ENCODE measurements at regions of chr10 and their contacts with region 1.

Region 1: GRCh38 chr10:34815185-34816084 is at the start of gene PARD3:
- DNase-seq: peak; percentile 71 to 83 (median 73)
- ATAC-seq: peak; percentile 43 to 85 (median 81)
- H3K4me3 ChIP-seq: peak within 1 kb of the TSS; percentile 67 to 98 (median 84)
- H3K27ac ChIP-seq: peak within 1 kb of the TSS; percentile 78 to 96 (median 82)
- H3K4me1 ChIP-seq: peaks cover 0 to 56% (median 24%) of the 10 kb centered on the region in 12 donors
- H3K27me3 ChIP-seq: peaks cover 0 to 37% (median 0%) of the 10 kb centered on the region in 9 donors
- CTCF ChIP-seq: no peak
- POLR2A ChIP-seq: no peak
- total RNA-seq, gene PARD3: 27.9 to 69.7 (median 33.1) TPM

Region 2: DNA sequence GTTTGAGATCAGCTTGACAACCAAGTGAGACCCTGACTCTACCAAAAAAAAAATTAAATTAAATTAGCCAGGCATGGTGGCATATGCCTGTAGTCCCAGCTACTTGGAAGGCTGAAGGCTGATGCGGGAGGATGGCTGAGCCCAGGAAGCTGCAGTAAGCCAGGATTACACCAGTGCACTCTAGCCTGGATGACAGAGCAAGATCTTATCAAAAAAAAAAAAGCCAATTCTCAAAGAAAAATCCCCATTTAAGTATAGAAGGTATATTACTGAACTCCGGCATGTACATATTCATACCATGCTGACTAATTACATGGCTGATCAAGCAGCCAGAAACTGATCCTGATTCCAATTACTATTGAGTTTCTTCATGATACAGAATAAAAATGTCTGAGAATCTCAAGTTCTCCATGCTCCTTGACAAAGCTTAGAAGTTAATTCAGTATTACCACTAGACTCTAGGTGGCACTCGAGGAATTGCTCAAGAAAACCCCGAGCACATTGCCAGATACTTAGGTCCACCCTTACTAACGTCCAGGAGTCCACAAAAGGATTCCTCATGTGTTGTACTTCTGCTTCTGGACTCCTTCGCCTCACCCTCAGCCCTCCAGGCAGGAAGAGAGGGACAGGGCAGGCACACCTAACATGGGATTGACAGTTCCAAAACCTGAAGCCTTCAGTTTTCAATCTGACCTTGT is 149.3 kb before region 1 on chr10:
- intact Hi-C with region 1: loop called in 7 of 10 experiments (anchors 5 to 10 kb)
- DNase-seq: peak in 1 of 5 donors; percentile 36
- ATAC-seq: peak in 3 of 4 donors; percentile 80 to 85 (median 84)
- H3K4me3 ChIP-seq: no peak overlapping the region
- H3K27ac ChIP-seq: no peak overlapping the region
- H3K4me1 ChIP-seq: peaks cover 0 to 23% (median 2%) of the 10 kb centered on the region in 12 donors
- H3K27me3 ChIP-seq: no peaks in the 10 kb centered on the region
- CTCF ChIP-seq: peak; percentile 28 to 67 (median 54)
- POLR2A ChIP-seq: no peak

Region 3: DNA sequence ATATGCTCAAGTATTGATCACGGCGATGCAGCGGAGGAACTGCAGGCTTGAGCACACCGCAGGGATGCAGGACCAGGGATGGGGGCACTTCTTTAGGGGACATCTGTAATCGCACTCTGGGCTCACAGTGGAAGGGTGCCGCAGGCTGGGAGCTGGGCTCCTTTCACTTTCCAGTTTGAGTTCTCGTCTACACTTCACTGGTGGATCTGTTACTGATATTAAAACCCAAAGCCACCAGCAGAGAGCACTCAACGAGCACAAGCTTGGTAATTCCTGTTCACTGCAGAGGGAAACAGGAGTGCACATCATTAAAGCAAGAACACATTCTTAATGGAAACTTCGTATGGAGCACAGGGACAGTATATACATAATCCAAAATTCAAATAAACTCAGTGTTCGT is 91.7 kb before region 1 on chr10:
- intact Hi-C with region 1: loop called in 7 of 10 experiments (anchors 5 kb)
- DNase-seq: peak in 4 of 5 donors; percentile 37 to 54 (median 40)
- ATAC-seq: peak in 3 of 4 donors; percentile 74 to 83 (median 76)
- H3K4me3 ChIP-seq: no peak overlapping the region
- H3K27ac ChIP-seq: peak overlapping the region in 2 of 12 donors; percentile 22 to 34
- H3K4me1 ChIP-seq: peaks cover 2 to 53% (median 15%) of the 10 kb centered on the region in 12 donors
- H3K27me3 ChIP-seq: no peaks in the 10 kb centered on the region
- CTCF ChIP-seq: peak; percentile 28 to 71 (median 55)
- POLR2A ChIP-seq: no peak

Region 4: DNA sequence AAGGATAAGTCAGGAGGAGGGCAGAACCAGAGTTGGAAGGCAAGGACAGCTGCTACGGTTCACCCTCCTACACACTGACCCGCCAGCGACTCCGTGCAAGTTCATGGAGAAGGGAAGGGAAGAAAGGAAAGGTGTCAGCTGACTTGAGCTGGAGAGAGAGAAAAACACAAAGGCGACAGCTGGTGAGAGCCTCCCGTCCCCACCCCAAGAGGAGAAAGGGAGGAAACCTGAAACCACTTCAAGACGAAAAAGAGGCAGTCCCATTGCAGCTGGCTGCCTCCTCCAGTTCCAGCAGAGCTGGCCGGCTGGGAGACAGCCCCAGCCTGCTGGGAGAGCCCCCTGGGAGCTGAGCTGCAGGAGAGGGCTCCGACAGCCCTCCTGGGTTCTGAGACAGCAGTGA is 75.5 kb before region 1 on chr10:
- intact Hi-C with region 1: loop called in 1 of 10 experiments (anchors 10 kb)
- DNase-seq: peak; percentile 48 to 69 (median 55)
- ATAC-seq: peak in 3 of 4 donors; percentile 59 to 64 (median 63)
- H3K4me3 ChIP-seq: peak overlapping the region in 7 of 12 donors; percentile 0 to 28 (median 19)
- H3K27ac ChIP-seq: peak overlapping the region in 4 of 12 donors; percentile 25 to 39 (median 38)
- H3K4me1 ChIP-seq: peaks cover 0 to 35% (median 22%) of the 10 kb centered on the region in 12 donors
- H3K27me3 ChIP-seq: no peaks in the 10 kb centered on the region
- CTCF ChIP-seq: no peak
- POLR2A ChIP-seq: no peak

Measured in heart left ventricle (tissue), 16 donors.